MCF 10A (cell line): ENCODE measurements at regions of chr14 and their contacts with region 1.

Region 1: DNA sequence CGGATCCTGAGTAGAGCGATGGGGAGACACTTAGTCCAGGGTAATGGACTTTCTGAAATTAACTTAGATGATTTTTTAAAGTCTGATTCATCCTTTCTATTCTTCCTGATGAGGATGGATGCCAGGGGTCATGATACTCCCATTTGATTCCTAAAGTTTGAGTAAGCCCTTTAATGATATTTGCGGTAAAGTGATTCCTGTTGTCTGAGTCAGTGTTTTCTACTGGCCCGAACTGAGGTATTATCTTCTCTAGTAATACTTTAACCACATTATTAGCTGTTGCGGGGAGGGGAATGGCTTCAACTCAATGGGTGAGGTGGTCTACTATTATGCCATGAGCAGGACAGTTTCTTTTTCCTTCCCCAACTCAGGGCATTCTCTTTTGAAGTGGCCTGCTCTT is 111.6 kb downstream of the RIN3 start:
- DNase-seq: peak; percentile 82
- H3K4me3 Mint-ChIP-seq: no peak overlapping the region
- H3K27ac Mint-ChIP-seq: peak overlapping the region; percentile 43
- H3K4me1 Mint-ChIP-seq: peaks cover 24% of the 10 kb centered on the region
- H3K27me3 Mint-ChIP-seq: no peaks in the 10 kb centered on the region
- CTCF ChIP-seq: no peak

Region 2: DNA sequence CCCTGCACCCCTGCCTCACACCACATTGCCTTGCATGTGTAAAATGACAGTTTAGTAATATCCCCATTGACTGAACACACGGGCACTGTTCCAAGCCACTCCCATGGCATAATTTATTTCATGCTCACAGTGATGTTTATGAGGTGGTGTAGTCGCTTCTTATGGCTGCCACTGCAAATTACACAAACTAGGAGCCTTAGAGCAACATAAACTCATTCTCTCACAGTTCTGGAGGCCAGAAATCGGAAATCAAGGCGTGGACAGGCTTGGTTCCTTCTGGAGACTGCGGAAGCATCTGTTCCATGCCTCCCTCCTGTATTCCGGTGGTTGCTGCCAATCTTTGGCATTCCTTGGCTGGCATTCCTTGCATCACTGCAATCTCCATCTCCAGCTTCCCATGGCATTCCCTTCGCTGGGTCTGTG is 14.4 kb before region 1 on chr14:
- CTCF ChIA-PET with region 1: interaction called, 3 read pairs
- POLR2A ChIA-PET with region 1: interaction called, 5 read pairs
- intact Hi-C with region 1: loop called (anchors 1 kb)
- DNase-seq: peak; percentile 85
- H3K4me3 Mint-ChIP-seq: no peak overlapping the region
- H3K27ac Mint-ChIP-seq: no peak overlapping the region
- H3K4me1 Mint-ChIP-seq: peaks cover 34% of the 10 kb centered on the region
- H3K27me3 Mint-ChIP-seq: no peaks in the 10 kb centered on the region
- CTCF ChIP-seq: no peak

Region 3: DNA sequence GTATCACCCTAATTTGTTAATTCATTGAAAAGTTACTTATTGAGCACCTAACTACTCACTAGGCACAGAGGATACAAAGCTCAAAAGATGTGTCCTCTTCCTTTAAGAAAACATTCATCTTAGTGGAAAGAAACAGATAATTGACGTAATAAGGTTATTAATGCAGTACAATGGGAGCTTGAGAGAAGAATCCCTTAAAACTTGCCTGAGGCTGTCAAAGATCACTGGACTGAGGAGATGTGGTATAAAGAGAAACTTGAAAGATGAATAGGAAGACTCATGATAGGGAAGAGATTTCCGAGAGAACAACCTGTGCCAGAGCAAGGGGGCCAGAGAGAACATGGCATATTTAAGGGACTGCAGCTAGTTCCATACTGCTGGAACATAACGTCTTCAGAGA is 188.0 kb after region 1 on chr14:
- CTCF ChIA-PET with region 1: no interaction called
- POLR2A ChIA-PET with region 1: no interaction called
- intact Hi-C with region 1: no loop called
- DNase-seq: no peak
- H3K4me3 Mint-ChIP-seq: no peak overlapping the region
- H3K27ac Mint-ChIP-seq: no peak overlapping the region
- H3K4me1 Mint-ChIP-seq: no peaks in the 10 kb centered on the region
- H3K27me3 Mint-ChIP-seq: no peaks in the 10 kb centered on the region
- CTCF ChIP-seq: no peak